HepG2 (cell line): ENCODE measurements at regions of chr4 and their contacts with region 1.

Region 1: DNA sequence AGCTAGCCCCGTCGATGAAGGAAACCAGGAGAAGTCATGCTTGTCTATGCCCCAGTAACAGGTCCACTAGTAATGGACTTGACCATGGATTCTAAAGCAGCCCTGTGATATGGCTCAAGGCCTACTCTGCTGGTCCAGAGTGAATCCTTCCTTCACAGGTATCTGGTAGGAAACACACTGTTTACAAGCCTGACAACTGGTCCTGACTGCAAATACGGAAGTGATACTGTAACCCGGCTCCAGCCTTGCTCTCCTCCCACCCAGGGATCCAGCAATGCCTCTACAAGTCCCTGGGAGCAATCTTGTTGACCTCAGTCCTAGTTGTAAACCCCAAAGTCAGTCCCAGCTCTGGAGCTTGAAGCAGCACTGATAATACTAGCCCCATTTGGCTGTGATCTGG is 239.2 kb upstream of the GRID2 start:
- DNase-seq: no peak
- ATAC-seq: no peak
- H3K4me3 ChIP-seq: no peak overlapping the region
- H3K27ac ChIP-seq: no peak overlapping the region
- H3K4me1 ChIP-seq: no peaks in the 10 kb centered on the region
- H3K27me3 ChIP-seq: no peaks in the 10 kb centered on the region; a peak in 1 of 5 replicates
- CTCF ChIP-seq: no peak
- EP300 ChIP-seq: no peak
- POLR2A ChIP-seq: no peak
- RAD21 ChIP-seq: no peak

Region 2: DNA sequence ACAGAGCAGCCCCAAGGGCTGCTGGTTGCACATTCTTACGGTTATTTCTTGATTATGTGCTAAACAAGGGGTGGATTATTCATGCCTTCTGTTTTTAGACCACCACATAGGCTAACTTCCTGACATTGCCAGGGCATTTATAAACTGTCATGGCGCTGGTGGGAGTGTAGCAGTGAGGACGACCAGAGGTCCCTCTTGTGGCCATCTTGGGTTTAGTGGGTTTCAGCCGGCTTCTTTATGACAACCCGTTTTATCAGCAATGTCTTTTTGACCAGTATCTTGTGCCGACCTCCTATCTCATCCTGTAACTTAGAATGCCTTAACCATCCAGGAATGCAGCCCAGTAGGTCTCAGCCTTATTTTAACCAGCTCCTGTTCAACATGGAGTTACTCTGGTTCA is 26.8 kb after region 1 on chr4:
- CTCF ChIA-PET with region 1: no interaction called
- POLR2A ChIA-PET with region 1: no interaction called
- in situ Hi-C with region 1: no loop called
- intact Hi-C with region 1: no loop called
- DNase-seq: peak; percentile 21
- ATAC-seq: peak; percentile 87
- H3K4me3 ChIP-seq: peak overlapping the region; percentile 12 to 41 (median 16); a peak in 4 of 6 replicates
- H3K27ac ChIP-seq: no peak overlapping the region
- H3K4me1 ChIP-seq: no peaks in the 10 kb centered on the region
- H3K27me3 ChIP-seq: 0 out of 5 replicates have a peak, but pooled peaks cover 0 to 1% of the 10 kb centered on the region in 2 experiments
- CTCF ChIP-seq: peak; percentile 32; the same call in 1 of the 2 replicates
- EP300 ChIP-seq: no peak
- POLR2A ChIP-seq: no peak
- RAD21 ChIP-seq: peak; percentile 40; the same call in 1 of the 2 replicates

Region 3: DNA sequence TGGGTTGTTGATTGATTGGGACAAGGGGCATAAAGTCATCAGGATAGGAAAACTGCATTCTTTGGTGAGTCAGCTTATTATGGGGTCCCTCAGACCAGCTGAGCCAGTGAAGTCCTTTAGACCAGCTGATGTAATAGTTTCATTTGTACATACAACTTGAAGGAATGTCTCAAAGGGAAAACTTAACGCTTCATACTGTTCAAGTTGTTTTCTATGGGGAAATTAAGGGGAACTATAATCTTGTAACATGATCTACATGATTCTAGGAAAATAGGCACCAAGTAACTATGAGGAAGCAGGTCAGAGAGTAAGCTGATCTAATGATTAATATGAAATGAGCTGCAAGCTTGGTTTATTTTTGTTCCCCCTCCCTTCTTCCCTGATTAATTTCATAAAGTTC is 64.1 kb after region 1 on chr4:
- CTCF ChIA-PET with region 1: no interaction called
- POLR2A ChIA-PET with region 1: no interaction called
- in situ Hi-C with region 1: no loop called
- intact Hi-C with region 1: loop called (anchors 2 kb)
- DNase-seq: no peak
- ATAC-seq: no peak
- H3K4me3 ChIP-seq: no peak overlapping the region
- H3K27ac ChIP-seq: no peak overlapping the region
- H3K4me1 ChIP-seq: no peaks in the 10 kb centered on the region
- H3K27me3 ChIP-seq: no peaks in the 10 kb centered on the region
- CTCF ChIP-seq: no peak
- EP300 ChIP-seq: no peak
- POLR2A ChIP-seq: no peak
- RAD21 ChIP-seq: no peak

Region 4: GRCh38 chr4:92210906-92211305 is 146.3 kb after region 1 on chr4:
- CTCF ChIA-PET with region 1: no interaction called
- POLR2A ChIA-PET with region 1: no interaction called
- in situ Hi-C with region 1: no loop called
- intact Hi-C with region 1: no loop called
- DNase-seq: no peak
- ATAC-seq: no peak
- H3K4me3 ChIP-seq: no peak overlapping the region
- H3K27ac ChIP-seq: no peak overlapping the region
- H3K4me1 ChIP-seq: no peaks in the 10 kb centered on the region
- H3K27me3 ChIP-seq: no peaks in the 10 kb centered on the region; a peak in 1 of 5 replicates
- CTCF ChIP-seq: no peak
- EP300 ChIP-seq: no peak
- POLR2A ChIP-seq: no peak
- RAD21 ChIP-seq: no peak

Region 5: DNA sequence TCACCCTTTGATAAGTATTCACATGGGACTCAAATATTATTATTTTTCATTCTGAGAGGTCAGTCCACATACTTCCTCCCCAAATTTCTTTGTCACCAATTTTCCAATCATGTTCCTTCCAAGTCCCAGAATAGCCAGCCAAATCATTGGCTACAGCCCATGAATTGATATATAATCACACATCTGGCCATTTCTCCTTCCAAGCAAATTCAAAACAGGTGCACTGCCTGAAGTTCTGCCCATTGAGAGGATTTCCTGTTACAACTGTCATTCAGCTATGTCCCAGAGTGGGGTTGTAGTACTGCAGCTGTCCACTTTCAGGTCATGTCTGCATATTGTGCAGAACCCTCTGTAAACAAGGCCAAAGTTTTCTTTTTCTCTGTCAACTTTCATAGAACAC is 587.0 kb after region 1 on chr4:
- CTCF ChIA-PET with region 1: no interaction called
- POLR2A ChIA-PET with region 1: no interaction called
- in situ Hi-C with region 1: no loop called
- intact Hi-C with region 1: no loop called
- DNase-seq: no peak
- ATAC-seq: peak; percentile 58
- H3K4me3 ChIP-seq: no peak overlapping the region
- H3K27ac ChIP-seq: no peak overlapping the region
- H3K4me1 ChIP-seq: no peaks in the 10 kb centered on the region
- H3K27me3 ChIP-seq: no peaks in the 10 kb centered on the region
- CTCF ChIP-seq: no peak
- EP300 ChIP-seq: no peak
- POLR2A ChIP-seq: no peak
- RAD21 ChIP-seq: no peak